IMR-90 (cell line): ENCODE measurements at regions of chr12 and their contacts with region 1.

Region 1: DNA sequence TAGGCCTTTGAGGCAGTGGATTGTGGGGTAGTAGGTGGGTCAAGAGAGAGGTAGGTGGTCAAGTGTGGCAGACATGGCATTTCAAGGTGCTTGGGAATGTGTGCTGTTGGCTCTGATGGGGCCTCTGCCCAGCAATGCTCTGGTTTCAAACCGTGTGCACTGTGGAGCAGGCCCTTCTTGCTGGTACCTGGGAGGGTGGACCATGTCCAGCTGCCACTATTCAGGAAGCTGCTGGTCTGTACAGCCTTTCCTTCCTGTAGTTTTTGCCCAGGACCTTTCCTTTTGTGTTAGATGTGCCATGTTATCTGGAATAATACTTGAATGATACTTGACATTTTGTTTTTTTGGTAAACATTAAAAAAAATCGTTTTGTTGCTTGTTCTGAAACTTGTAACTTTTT is 14.8 kb downstream of the RIMKLB start:
- DNase-seq: no peak
- ATAC-seq: no peak
- H3K4me3 ChIP-seq: no peak overlapping the region
- H3K27ac ChIP-seq: no peak overlapping the region
- H3K4me1 ChIP-seq: peaks cover 3% of the 10 kb centered on the region; the same call in 1 of the 2 replicates
- H3K27me3 ChIP-seq: no peaks in the 10 kb centered on the region
- CTCF ChIP-seq: no peak
- POLR2A ChIP-seq: no peak
- RAD21 ChIP-seq: no peak

Region 2: GRCh38 chr12:8622646-8623045 is 89.9 kb before region 1 on chr12:
- CTCF ChIA-PET with region 1: no interaction called
- POLR2A ChIA-PET with region 1: no interaction called
- dilution Hi-C with region 1: no loop called
- in situ Hi-C with region 1: no loop called
- intact Hi-C with region 1: no loop called
- DNase-seq: no peak
- ATAC-seq: no peak
- H3K4me3 ChIP-seq: no peak overlapping the region
- H3K27ac ChIP-seq: no peak overlapping the region
- H3K4me1 ChIP-seq: no peaks in the 10 kb centered on the region
- H3K27me3 ChIP-seq: no peaks in the 10 kb centered on the region
- CTCF ChIP-seq: no peak
- POLR2A ChIP-seq: no peak
- RAD21 ChIP-seq: no peak

Region 3: DNA sequence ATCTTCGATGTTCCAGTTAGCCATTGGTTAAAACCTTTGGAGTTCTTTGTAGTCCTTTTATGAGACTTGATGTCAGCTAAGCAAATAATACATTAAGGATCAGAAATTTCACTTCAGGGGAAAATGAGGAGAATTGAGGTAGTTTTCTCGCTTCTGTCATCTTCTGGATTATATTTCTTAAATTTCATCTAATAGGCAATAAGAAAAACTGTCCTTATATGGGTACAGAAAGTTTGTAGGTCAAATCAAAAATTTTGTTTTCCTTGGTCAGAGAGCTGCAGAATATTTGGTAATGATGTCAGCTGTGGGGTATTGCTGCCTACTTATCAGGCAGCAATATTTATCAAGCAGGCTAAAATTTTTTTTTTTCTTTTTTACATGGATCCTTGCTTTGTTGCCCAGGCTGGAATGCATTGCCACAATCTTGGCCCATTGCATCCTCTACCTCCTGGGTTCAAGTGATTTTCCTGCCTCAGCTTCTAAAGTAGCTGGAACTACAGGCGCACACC is 22.4 kb after region 1 on chr12:
- CTCF ChIA-PET with region 1: interaction called, 5 read pairs
- POLR2A ChIA-PET with region 1: interaction called, 12 read pairs
- dilution Hi-C with region 1: no loop called
- in situ Hi-C with region 1: no loop called
- intact Hi-C with region 1: no loop called
- DNase-seq: peak; percentile 19
- ATAC-seq: peak; percentile 49; the same call in 1 of the 2 replicates
- H3K4me3 ChIP-seq: no peak overlapping the region
- H3K27ac ChIP-seq: no peak overlapping the region
- H3K4me1 ChIP-seq: no peaks in the 10 kb centered on the region
- H3K27me3 ChIP-seq: no peaks in the 10 kb centered on the region
- CTCF ChIP-seq: no peak
- POLR2A ChIP-seq: no peak
- RAD21 ChIP-seq: no peak